Naive thymus-derived CD4-positive, alpha-beta T cell (primary cell): ENCODE measurements at regions of chr5 and their contacts with region 1.

Region 1: GRCh38 chr5:143037071-143037470 is 266.9 kb downstream of the ARHGAP26 start:
- DNase-seq: no peak
- ATAC-seq: no peak
- H3K4me3 ChIP-seq: no peak overlapping the region
- H3K4me3 Mint-ChIP-seq: no peak overlapping the region
- H3K27ac ChIP-seq: no peak overlapping the region
- H3K27ac Mint-ChIP-seq: no peak overlapping the region
- H3K4me1 ChIP-seq: no peaks in the 10 kb centered on the region
- H3K4me1 Mint-ChIP-seq: peaks cover 0 to 39% (median 0%) of the 10 kb centered on the region in 7 donors
- H3K27me3 ChIP-seq: no peaks in the 10 kb centered on the region
- H3K27me3 Mint-ChIP-seq: no peaks in the 10 kb centered on the region

Region 2: GRCh38 chr5:143057580-143057999 is 20.5 kb after region 1 on chr5:
- CTCF ChIA-PET with region 1: no interaction called
- POLR2A ChIA-PET with region 1: no interaction called
- intact Hi-C with region 1: loop called in 1 of 2 experiments (anchors 2 kb)
- DNase-seq: no peak
- ATAC-seq: no peak
- H3K4me3 ChIP-seq: no peak overlapping the region
- H3K4me3 Mint-ChIP-seq: no peak overlapping the region
- H3K27ac ChIP-seq: no peak overlapping the region
- H3K27ac Mint-ChIP-seq: peak overlapping the region in 1 of 9 donors; percentile 11
- H3K4me1 ChIP-seq: no peaks in the 10 kb centered on the region
- H3K4me1 Mint-ChIP-seq: peaks cover 0 to 49% (median 5%) of the 10 kb centered on the region in 7 donors
- H3K27me3 ChIP-seq: no peaks in the 10 kb centered on the region
- H3K27me3 Mint-ChIP-seq: no peaks in the 10 kb centered on the region

Region 3: GRCh38 chr5:144084971-144085370 is 1047.9 kb after region 1 on chr5:
- CTCF ChIA-PET with region 1: no interaction called
- POLR2A ChIA-PET with region 1: no interaction called
- intact Hi-C with region 1: no loop called
- DNase-seq: no peak
- ATAC-seq: no peak
- H3K4me3 ChIP-seq: no peak overlapping the region
- H3K4me3 Mint-ChIP-seq: no peak overlapping the region
- H3K27ac ChIP-seq: no peak overlapping the region
- H3K27ac Mint-ChIP-seq: no peak overlapping the region
- H3K4me1 ChIP-seq: no peaks in the 10 kb centered on the region
- H3K4me1 Mint-ChIP-seq: peaks cover 0 to 4% (median 0%) of the 10 kb centered on the region in 7 donors
- H3K27me3 ChIP-seq: no peaks in the 10 kb centered on the region
- H3K27me3 Mint-ChIP-seq: peaks cover 0 to 1% (median 0%) of the 10 kb centered on the region in 5 donors